ENCODE measurements at regions of chr1 and their contacts with region 1.

Region 1: GRCh38 chr1:179882243-179883039 is at the start of gene TOR1AIP1:
- DNase-seq: peak; percentile 99
- H3K4me3 ChIP-seq: peak within 1 kb of the TSS; percentile 79
- H3K27ac ChIP-seq: peak within 1 kb of the TSS; percentile 96
- H3K4me1 ChIP-seq: peaks cover 29% of the 10 kb centered on the region
- CTCF ChIP-seq: peak; percentile 58
- total RNA-seq, gene TOR1AIP1: 11.0 and 12.1 TPM in 2 replicates

Region 2: DNA sequence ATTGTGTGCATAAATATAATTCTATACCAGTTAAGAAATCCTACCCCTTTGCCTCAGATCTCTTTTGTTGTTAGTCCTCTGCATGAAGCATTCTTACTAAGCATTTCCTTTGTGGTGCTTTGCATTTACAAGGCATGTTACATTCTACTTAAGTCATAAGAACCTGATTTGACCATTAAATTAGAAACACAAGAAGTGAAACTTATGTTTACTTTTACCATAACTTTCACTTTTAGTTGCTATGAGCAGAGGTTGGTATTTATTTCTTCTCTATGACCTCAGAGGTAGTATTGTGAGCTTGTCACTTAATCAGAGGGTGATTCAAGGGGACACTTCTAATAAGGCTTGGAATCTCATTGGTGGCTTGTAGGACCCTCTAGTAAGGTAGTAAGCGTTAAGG is 847.7 kb before region 1 on chr1:
- CTCF ChIA-PET with region 1: no interaction called
- POLR2A ChIA-PET with region 1: no interaction called
- intact Hi-C with region 1: loop called (anchors 5 kb)
- DNase-seq: peak; percentile 69
- H3K4me3 ChIP-seq: peak overlapping the region; percentile 57
- H3K27ac ChIP-seq: peak overlapping the region; percentile 82
- H3K4me1 ChIP-seq: peaks cover 98% of the 10 kb centered on the region
- CTCF ChIP-seq: no peak

Region 3: GRCh38 chr1:180154325-180155181 is 272.1 kb after region 1 on chr1 and contains the start of gene QSOX1:
- CTCF ChIA-PET with region 1: no interaction called
- POLR2A ChIA-PET with region 1: no interaction called
- intact Hi-C with region 1: loop called (anchors 2 kb)
- DNase-seq: peak; percentile 92
- H3K4me3 ChIP-seq: peak within 1 kb of the TSS; percentile 89
- H3K27ac ChIP-seq: peak within 1 kb of the TSS; percentile 33
- H3K4me1 ChIP-seq: peaks cover 22% of the 10 kb centered on the region
- CTCF ChIP-seq: no peak
- total RNA-seq, gene QSOX1: 8.4 and 9.8 TPM in 2 replicates

Measured in OCI-LY7 (cell line).